Right cardiac atrium (tissue), 5 donors: ENCODE measurements at regions of chr12 and their contacts with region 1.

Region 1: DNA sequence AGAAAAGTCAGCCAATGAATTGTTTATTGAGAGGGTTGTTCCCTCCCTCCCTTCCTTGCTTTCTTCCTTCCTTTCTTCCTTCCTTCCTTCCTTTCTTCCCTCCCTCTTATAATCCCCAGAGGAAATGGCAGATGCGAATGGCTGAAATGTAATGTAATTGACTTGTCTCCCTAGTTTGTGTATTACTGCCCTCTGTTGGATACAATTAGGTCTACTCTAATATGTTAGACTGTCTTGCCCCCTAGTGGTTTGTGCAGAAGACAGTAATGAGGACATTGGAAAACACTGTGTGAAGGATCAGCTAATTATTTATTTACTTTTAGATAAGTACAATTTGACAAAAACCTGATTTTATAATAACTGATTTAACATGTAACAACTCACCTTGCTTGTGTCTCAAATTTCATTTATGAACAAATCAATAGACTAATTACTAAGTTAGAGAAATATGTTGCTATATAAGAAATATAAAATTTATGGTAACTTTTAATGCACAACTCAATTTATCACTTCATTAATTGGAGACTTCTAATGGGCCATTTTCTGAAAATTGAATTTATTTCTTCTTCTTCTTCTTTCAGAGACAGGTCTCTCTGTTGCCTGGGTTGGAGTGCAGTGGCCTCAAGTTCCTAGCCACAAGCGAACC is 229.8 kb upstream of the LRIG3 start:
- DNase-seq: no peak
- ATAC-seq: peak; percentile 91 to 93
- H3K4me3 ChIP-seq: no peak overlapping the region
- H3K27ac ChIP-seq: no peak overlapping the region
- H3K4me1 ChIP-seq: no peaks in the 10 kb centered on the region
- H3K27me3 ChIP-seq: no peaks in the 10 kb centered on the region

Region 2: DNA sequence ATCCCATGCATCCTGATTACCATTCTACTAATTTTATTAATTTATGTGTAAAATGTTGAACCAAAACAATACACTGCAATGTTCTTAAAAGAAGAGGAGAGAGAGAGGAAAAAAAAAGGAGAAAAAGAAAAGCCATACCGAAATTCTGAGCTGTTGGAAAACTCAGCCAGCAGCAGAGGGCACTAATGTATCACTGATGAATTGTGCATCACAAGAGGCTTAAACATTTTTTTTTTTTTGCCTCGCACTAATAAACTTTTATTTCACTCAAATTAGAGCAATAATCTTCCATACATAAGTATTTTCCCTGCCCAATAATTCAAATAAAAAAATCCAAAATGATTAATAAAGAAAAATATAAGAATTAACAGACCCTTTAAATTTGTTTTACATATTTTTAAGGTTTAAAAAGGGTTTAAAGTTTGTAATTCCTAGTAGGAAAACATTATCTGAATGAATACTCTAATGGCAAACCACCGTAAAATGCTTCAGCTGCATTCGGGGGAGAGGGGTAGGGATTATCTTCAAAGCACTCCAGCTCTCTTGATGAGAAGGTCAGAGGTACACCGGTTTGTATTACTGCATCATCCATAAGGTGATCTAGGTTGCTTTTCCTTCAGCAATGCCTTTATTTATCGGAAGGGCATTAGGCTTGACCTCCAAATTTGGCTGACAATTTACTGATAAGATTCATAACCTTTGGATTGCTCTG is 1166.8 kb before region 1 on chr12:
- intact Hi-C with region 1: loop called in 2 of 4 experiments (anchors 10 kb)
- DNase-seq: peak in 1 of 3 donors; percentile 45
- ATAC-seq: no peak
- H3K4me3 ChIP-seq: no peak overlapping the region
- H3K27ac ChIP-seq: no peak overlapping the region
- H3K4me1 ChIP-seq: no peaks in the 10 kb centered on the region
- H3K27me3 ChIP-seq: no peaks in the 10 kb centered on the region

Region 3: GRCh38 chr12:57993025-57993424 is 1157.1 kb before region 1 on chr12:
- intact Hi-C with region 1: loop called in 3 of 4 experiments (anchors 10 kb)
- DNase-seq: no peak
- ATAC-seq: no peak
- H3K4me3 ChIP-seq: no peak overlapping the region
- H3K27ac ChIP-seq: no peak overlapping the region
- H3K4me1 ChIP-seq: no peaks in the 10 kb centered on the region
- H3K27me3 ChIP-seq: no peaks in the 10 kb centered on the region

Region 4: GRCh38 chr12:58346032-58346632 is 804.0 kb before region 1 on chr12:
- intact Hi-C with region 1: loop called in 2 of 4 experiments (anchors 5 to 10 kb)
- DNase-seq: no peak
- ATAC-seq: peak in 1 of 2 donors; percentile 71
- H3K4me3 ChIP-seq: no peak overlapping the region
- H3K27ac ChIP-seq: no peak overlapping the region
- H3K4me1 ChIP-seq: no peaks in the 10 kb centered on the region
- H3K27me3 ChIP-seq: no peaks in the 10 kb centered on the region

Region 5: GRCh38 chr12:58529897-58530741 is 620.0 kb before region 1 on chr12:
- intact Hi-C with region 1: loop called in 1 of 4 experiments (anchors 10 kb)
- DNase-seq: no peak
- ATAC-seq: peak in 1 of 2 donors; percentile 23
- H3K4me3 ChIP-seq: no peak overlapping the region
- H3K27ac ChIP-seq: no peak overlapping the region
- H3K4me1 ChIP-seq: no peaks in the 10 kb centered on the region
- H3K27me3 ChIP-seq: no peaks in the 10 kb centered on the region

Region 6: DNA sequence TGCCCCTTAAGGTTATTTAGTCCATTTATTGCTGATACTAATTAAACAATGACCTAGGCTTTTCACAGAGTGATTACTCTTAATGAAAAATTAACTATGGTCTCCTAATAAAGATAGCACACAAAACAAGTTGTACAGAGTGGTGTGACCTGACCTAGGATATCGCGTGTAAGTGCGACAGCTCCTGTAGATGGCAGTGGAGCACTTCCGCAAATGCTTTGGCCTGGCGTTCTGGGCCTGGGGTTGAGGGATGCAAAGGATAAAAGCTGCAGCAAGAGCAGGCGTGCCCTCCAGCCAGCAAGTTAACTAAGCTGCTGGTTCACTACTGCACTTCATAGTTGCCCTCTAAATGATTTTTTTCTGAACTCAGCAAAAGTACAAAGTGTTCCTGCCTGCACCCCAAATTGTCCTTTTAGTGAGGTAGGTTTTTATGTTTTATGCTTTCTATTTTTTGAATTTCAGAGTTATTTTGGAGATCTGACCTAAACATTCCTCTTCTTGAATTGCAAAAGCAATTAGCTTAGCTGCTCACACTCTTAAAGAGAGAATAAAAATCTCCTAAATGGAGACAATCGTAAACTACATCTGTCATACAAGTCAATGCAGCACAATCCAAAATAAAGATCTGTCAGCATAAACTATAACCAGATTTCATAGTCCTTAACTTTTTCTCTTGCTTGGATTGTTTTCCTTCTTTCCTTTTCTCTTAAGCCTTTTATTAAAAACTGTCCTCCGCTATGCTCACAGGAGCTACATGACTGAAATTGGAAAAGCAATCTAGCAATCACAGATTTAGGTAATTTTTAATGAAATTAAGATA is 609.4 kb before region 1 on chr12:
- intact Hi-C with region 1: loop called in 3 of 4 experiments (anchors 5 to 10 kb)
- DNase-seq: peak; percentile 71 to 84 (median 74)
- ATAC-seq: peak; percentile 94 to 95
- H3K4me3 ChIP-seq: no peak overlapping the region
- H3K27ac ChIP-seq: no peak overlapping the region
- H3K4me1 ChIP-seq: no peaks in the 10 kb centered on the region
- H3K27me3 ChIP-seq: no peaks in the 10 kb centered on the region

Region 7: GRCh38 chr12:59113831-59114615 is 36.1 kb before region 1 on chr12:
- intact Hi-C with region 1: loop called in 3 of 4 experiments (anchors 5 kb)
- DNase-seq: peak; percentile 73 to 86 (median 75)
- ATAC-seq: peak; percentile 83 to 87
- H3K4me3 ChIP-seq: no peak overlapping the region
- H3K27ac ChIP-seq: no peak overlapping the region
- H3K4me1 ChIP-seq: no peaks in the 10 kb centered on the region
- H3K27me3 ChIP-seq: no peaks in the 10 kb centered on the region